ENCODE measurements at regions of chr14 and their contacts with region 1.

Region 1: GRCh38 chr14:61837336-61838229 is 75.4 kb downstream of the SNAPC1 start:
- DNase-seq: peak; percentile 46
- ATAC-seq: peak; percentile 99
- H3K4me3 ChIP-seq: no peak overlapping the region
- H3K27ac ChIP-seq: no peak overlapping the region
- H3K4me1 ChIP-seq: no peaks in the 10 kb centered on the region; the same call in 1 of the 2 replicates
- H3K27me3 ChIP-seq: no peaks in the 10 kb centered on the region
- CTCF ChIP-seq: peak; percentile 93 to 96 (median 96)
- EP300 ChIP-seq: no peak
- POLR2A ChIP-seq: no peak
- RAD21 ChIP-seq: peak; percentile 100

Region 2: GRCh38 chr14:61269321-61270083 is 568.1 kb before region 1 on chr14:
- CTCF ChIA-PET with region 1: interaction called, 16 read pairs
- POLR2A ChIA-PET with region 1: no interaction called
- RAD21 ChIA-PET with region 1: interaction called, 16 read pairs
- SMC1A ChIA-PET with region 1: interaction called, 12 read pairs
- in situ Hi-C with region 1: no loop called
- intact Hi-C with region 1: loop called (anchors 5 kb)
- DNase-seq: peak; percentile 45
- ATAC-seq: peak; percentile 97
- H3K4me3 ChIP-seq: peak overlapping the region; percentile 49; the same call in 1 of the 2 replicates
- H3K27ac ChIP-seq: no peak overlapping the region
- H3K4me1 ChIP-seq: no peaks in the 10 kb centered on the region
- H3K27me3 ChIP-seq: peaks cover 0 to 5% of the 10 kb centered on the region in 2 experiments; a peak in 1 of 4 replicates
- CTCF ChIP-seq: peak; percentile 66 to 75 (median 74)
- EP300 ChIP-seq: no peak
- POLR2A ChIP-seq: no peak
- RAD21 ChIP-seq: peak; percentile 84

Region 3: DNA sequence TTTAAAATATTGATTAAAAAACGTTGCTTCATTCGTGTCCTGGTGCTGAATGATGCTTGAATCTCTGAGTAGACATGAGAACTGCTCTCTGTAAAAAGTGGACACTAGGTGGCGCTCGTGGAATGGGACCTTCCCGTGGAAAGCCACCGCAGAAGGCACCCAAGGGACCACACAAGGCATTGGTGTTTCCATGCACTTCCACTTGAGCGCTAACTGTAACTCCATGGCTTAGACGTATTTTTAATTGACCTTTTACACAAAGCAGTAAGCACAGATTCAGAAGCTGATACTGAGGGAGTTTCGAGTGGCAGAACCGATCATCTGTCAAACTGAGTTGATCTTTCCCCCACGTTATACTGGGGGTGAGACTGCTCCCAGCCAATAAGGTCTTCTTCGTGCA is 380.9 kb before region 1 on chr14:
- CTCF ChIA-PET with region 1: interaction called, 39 read pairs
- POLR2A ChIA-PET with region 1: no interaction called
- RAD21 ChIA-PET with region 1: interaction called, 22 read pairs
- SMC1A ChIA-PET with region 1: interaction called, 22 read pairs
- in situ Hi-C with region 1: loop called (anchors 5 kb)
- intact Hi-C with region 1: loop called (anchors 1 kb)
- DNase-seq: no peak
- ATAC-seq: peak; percentile 86
- H3K4me3 ChIP-seq: no peak overlapping the region
- H3K27ac ChIP-seq: no peak overlapping the region
- H3K4me1 ChIP-seq: peaks cover 6% of the 10 kb centered on the region
- H3K27me3 ChIP-seq: no peaks in the 10 kb centered on the region
- CTCF ChIP-seq: peak; percentile 77 to 80 (median 80)
- EP300 ChIP-seq: no peak
- POLR2A ChIP-seq: no peak
- RAD21 ChIP-seq: peak; percentile 73

Region 4: DNA sequence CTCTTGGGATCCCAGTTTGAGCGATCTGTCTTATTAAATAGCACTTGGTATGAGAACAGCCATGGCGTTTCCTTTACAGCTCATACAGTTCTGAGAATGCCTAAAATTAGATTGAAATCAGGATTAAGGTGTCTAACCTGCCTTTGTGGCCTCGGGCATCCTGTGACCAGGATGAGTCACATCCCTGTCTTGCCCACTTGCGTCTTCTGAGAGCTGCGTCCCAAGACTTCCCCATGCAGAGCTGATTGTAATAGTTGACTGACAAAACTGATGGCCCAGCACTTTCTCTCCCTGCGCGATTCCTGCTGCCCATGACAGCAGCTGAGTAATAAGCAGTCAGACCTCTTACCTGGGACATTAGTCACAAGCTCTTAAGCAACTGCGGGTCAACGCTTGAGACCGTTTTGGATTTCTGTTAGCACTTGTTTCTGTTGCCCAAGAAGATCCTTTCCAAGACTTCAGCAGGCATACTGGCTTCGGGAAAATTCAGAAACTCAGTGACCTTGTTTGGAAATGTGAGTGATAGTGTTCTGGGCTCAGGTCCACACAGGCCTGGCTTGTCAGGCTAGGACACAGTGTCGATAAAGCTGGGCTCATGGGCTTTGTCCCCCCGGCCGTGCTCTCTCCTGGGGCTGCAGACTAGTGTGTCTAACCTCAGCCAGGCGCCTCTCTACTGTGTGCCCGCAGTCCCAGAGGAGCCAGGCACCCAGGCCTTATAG is 312.1 kb before region 1 on chr14:
- CTCF ChIA-PET with region 1: interaction called, 17 read pairs
- POLR2A ChIA-PET with region 1: no interaction called
- RAD21 ChIA-PET with region 1: interaction called, 3 read pairs
- SMC1A ChIA-PET with region 1: interaction called, 6 read pairs
- in situ Hi-C with region 1: no loop called
- intact Hi-C with region 1: no loop called
- DNase-seq: peak; percentile 85
- ATAC-seq: peak; percentile 88
- H3K4me3 ChIP-seq: peak overlapping the region; percentile 34; the same call in 1 of the 2 replicates
- H3K27ac ChIP-seq: peak overlapping the region; percentile 60
- H3K4me1 ChIP-seq: peaks cover 15% of the 10 kb centered on the region
- H3K27me3 ChIP-seq: no peaks in the 10 kb centered on the region
- CTCF ChIP-seq: no peak
- EP300 ChIP-seq: peak; percentile 35 to 56; a peak in 2 of 4 replicates
- POLR2A ChIP-seq: no peak
- RAD21 ChIP-seq: no peak

Region 5: GRCh38 chr14:61730756-61731373 is 106.7 kb before region 1 on chr14:
- CTCF ChIA-PET with region 1: interaction called, 6 read pairs
- POLR2A ChIA-PET with region 1: interaction called, 3 read pairs
- RAD21 ChIA-PET with region 1: interaction called, 6 read pairs
- SMC1A ChIA-PET with region 1: interaction called, 15 read pairs
- in situ Hi-C with region 1: no loop called
- intact Hi-C with region 1: no loop called
- DNase-seq: no peak
- ATAC-seq: 0 out of 3 replicates have a peak, but pooled peaks have one; percentile 25
- H3K4me3 ChIP-seq: no peak overlapping the region
- H3K27ac ChIP-seq: no peak overlapping the region
- H3K4me1 ChIP-seq: no peaks in the 10 kb centered on the region
- H3K27me3 ChIP-seq: no peaks in the 10 kb centered on the region
- CTCF ChIP-seq: peak in 1 of 3 experiments; percentile 25; a peak in 2 of 6 replicates
- EP300 ChIP-seq: no peak
- POLR2A ChIP-seq: no peak
- RAD21 ChIP-seq: peak; percentile 62

Region 6: DNA sequence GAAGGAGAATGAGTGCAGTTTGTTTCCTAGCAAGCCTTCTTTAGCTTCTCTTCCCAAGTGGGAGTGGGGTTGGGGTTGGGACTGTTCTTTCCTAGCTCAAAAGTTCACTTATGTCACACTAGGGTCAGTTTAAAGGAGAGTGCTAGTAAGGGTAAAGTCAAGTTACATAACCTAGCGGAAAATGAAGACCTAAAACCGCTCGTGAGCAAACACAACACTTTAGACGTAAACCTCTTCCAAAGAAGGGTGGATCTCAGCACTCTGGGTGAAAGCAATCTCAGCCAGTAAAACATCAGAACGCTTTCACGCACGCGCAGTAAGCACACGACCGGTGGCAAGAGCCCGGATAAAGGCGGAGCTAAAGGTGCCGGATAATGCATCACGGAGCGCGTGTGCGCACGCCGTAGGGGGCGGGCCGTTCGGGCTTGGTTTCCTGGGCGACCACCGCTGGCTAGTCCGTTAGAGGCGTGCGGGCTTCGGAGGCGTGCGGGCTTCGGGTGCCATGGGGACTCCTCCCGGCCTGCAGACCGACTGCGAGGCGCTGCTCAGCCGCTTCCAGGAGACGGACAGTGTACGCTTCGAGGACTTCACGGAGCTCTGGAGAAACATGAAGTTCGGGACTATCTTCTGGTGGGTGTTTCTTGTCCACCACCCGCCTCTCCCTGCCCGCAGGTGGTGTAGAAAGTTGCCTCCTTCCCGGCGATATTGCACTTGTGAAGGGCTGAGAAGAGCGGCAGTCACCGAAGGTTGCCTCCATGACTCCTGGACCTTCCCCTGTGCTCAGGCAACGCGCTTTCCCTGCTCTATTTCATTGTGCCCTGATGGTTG is 75.4 kb before region 1 on chr14 and contains the start of gene SNAPC1:
- CTCF ChIA-PET with region 1: interaction called, 17 read pairs
- POLR2A ChIA-PET with region 1: interaction called, 3 read pairs
- RAD21 ChIA-PET with region 1: interaction called, 17 read pairs
- SMC1A ChIA-PET with region 1: interaction called, 14 read pairs
- in situ Hi-C with region 1: no loop called
- intact Hi-C with region 1: no loop called
- DNase-seq: peak; percentile 96
- ATAC-seq: peak; percentile 99
- H3K4me3 ChIP-seq: peak within 1 kb of the TSS; percentile 98
- H3K27ac ChIP-seq: peak within 1 kb of the TSS; percentile 87
- H3K4me1 ChIP-seq: no peaks in the 10 kb centered on the region; the same call in 1 of the 2 replicates
- H3K27me3 ChIP-seq: no peaks in the 10 kb centered on the region
- CTCF ChIP-seq: no peak
- EP300 ChIP-seq: no peak
- POLR2A ChIP-seq: peak; percentile 93
- RAD21 ChIP-seq: no peak
- polyA plus RNA-seq, gene SNAPC1: 5.2 to 7.0 TPM

Region 7: GRCh38 chr14:61877044-61877408 is 39.4 kb after region 1 on chr14:
- CTCF ChIA-PET with region 1: no interaction called
- POLR2A ChIA-PET with region 1: no interaction called
- RAD21 ChIA-PET with region 1: no interaction called
- SMC1A ChIA-PET with region 1: no interaction called
- in situ Hi-C with region 1: no loop called
- intact Hi-C with region 1: no loop called
- DNase-seq: no peak
- ATAC-seq: no peak
- H3K4me3 ChIP-seq: no peak overlapping the region
- H3K27ac ChIP-seq: no peak overlapping the region
- H3K4me1 ChIP-seq: peaks cover 15% of the 10 kb centered on the region; the same call in 1 of the 2 replicates
- H3K27me3 ChIP-seq: no peaks in the 10 kb centered on the region
- CTCF ChIP-seq: no peak
- EP300 ChIP-seq: no peak
- POLR2A ChIP-seq: no peak
- RAD21 ChIP-seq: no peak

Region 8: DNA sequence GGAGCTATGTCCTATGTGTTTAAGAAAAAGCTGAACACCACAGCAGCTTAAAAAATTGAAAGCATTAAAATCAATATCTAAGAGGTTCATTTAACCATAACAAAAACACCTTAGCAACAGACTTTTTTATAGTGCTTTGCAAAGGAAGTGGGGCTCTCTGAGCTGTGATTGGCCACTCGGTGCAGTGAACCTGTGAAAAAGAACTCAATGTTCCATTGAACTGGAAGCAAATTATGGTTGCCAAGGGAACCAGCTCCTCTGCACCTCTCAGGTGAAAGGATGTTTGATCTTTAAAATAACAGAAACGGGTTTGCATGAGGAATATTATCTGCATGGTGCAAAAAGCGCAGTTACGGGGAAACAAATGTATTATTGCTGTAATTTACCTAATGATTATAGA is 74.0 kb after region 1 on chr14:
- CTCF ChIA-PET with region 1: no interaction called
- POLR2A ChIA-PET with region 1: no interaction called
- RAD21 ChIA-PET with region 1: no interaction called
- SMC1A ChIA-PET with region 1: no interaction called
- in situ Hi-C with region 1: no loop called
- intact Hi-C with region 1: no loop called
- DNase-seq: no peak
- ATAC-seq: no peak
- H3K4me3 ChIP-seq: no peak overlapping the region
- H3K27ac ChIP-seq: no peak overlapping the region
- H3K4me1 ChIP-seq: no peaks in the 10 kb centered on the region
- H3K27me3 ChIP-seq: no peaks in the 10 kb centered on the region; a peak in 2 of 4 replicates
- CTCF ChIP-seq: no peak
- EP300 ChIP-seq: no peak
- POLR2A ChIP-seq: no peak
- RAD21 ChIP-seq: no peak

Region 9: DNA sequence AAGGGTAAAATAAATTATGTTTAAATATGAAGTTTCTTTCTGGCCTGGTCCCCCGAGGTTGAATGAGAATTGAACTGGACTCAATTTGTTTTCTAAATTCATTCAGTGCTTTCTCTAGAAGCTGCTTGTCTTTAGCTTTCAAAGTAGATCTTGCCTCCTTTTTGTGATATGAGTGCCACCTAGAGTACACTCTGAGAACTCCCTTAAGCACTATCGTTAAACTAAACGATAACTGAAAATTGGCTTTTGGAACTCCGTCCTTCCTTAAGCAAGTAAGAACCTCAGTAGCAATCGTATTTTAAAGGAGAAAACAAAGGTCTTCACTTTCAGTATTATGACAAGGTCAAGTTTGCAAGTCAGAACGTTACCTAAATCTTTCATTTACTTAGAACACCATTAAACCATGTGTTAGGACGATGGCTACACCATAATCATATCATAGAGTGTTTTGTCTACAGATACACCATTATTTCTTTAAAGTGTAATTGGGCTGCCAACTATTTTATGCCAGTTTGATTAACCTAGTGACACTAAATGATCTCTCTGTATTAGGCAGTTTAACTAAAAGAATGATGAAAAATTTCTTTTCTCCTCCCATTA is 289.4 kb after region 1 on chr14:
- CTCF ChIA-PET with region 1: interaction called, 34 read pairs
- POLR2A ChIA-PET with region 1: no interaction called
- RAD21 ChIA-PET with region 1: interaction called, 22 read pairs
- SMC1A ChIA-PET with region 1: interaction called, 20 read pairs
- in situ Hi-C with region 1: no loop called
- intact Hi-C with region 1: loop called (anchors 2 kb)
- DNase-seq: no peak
- ATAC-seq: peak; percentile 86
- H3K4me3 ChIP-seq: no peak overlapping the region
- H3K27ac ChIP-seq: no peak overlapping the region
- H3K4me1 ChIP-seq: no peaks in the 10 kb centered on the region
- H3K27me3 ChIP-seq: no peaks in the 10 kb centered on the region; a peak in 1 of 4 replicates
- CTCF ChIP-seq: peak; percentile 71 to 76 (median 72)
- EP300 ChIP-seq: no peak
- POLR2A ChIP-seq: no peak
- RAD21 ChIP-seq: peak; percentile 99